ENCODE measurements at regions of chr10 and their contacts with region 1.

Region 1: DNA sequence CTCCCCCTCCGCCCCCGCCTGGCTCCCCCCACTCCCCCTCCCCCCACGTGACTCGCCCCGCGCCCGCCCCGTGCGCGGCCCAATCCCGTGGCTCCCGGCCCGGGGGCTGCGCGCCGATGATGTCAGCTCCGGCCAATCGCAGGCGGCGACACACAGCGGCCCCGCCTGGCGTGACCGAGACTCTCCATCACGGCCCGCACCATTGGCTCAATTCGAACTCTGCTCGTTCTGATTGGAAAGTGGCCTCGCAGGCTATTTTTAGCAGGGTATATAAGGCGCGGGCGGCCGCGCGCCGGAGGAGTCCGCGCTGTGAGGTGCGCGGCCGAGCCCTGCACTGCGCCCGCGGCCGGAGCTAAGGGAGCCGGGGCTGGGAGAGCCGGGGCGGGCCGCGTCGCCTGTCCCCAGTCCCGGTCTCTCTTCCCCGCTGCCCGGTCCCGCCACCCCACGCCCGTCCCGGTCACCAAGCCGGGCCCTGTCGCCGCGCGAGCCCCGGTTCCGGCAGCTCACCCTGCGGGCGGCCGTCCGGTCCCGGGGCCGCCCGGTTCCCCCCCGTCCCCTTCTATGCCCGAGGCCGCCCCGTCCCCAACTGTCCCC is 345 bp upstream of the KLF6 start:
- DNase-seq: peak; percentile 97
- H3K4me3 ChIP-seq: peak overlapping the region; percentile 98
- H3K27ac ChIP-seq: peak overlapping the region; percentile 100
- H3K4me1 ChIP-seq: peaks cover 2% of the 10 kb centered on the region; the same call in 1 of the 2 replicates
- H3K27me3 ChIP-seq: no peaks in the 10 kb centered on the region

Region 2: DNA sequence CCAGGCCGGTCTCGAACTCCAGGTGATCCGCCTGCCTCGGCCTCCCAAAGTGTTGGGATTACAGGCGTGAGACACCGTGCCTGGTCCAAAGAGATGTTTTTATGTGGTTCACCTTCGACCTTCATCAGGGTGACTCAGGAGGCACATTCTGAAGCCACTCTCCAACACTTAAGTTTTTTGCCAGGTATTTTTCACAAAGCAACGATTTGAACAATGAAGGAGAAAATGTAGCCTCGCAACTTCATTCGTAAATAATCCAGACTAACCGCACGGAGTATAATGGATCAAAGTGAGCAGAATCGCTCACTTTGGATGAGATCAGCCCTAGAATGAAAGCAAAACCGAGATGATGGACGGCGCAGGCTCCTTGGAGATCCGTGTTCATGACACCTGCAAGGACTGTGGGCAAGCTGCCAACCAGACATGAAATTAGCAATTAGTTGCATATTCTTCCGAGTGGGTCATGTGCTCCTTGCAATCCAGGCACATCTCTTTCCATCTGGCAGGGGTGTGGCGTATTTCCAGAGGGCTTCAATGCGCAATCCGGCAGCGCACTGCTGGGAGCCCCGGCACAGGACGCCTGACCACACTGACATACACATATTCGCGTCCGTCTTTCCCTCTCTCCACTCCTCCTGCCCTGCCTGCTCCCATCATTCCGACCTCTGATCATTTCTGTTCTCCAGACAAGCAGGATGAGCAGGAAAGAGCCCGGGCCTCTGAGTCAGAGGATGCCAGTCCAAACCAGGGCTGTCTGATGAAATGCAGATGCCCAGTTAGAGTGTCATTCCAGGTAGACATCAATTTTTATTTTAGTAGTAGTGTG is 148.8 kb before region 1 on chr10:
- in situ Hi-C with region 1: no loop called
- DNase-seq: peak; percentile 51
- H3K4me3 ChIP-seq: peak overlapping the region; percentile 33
- H3K27ac ChIP-seq: no peak overlapping the region
- H3K4me1 ChIP-seq: no peaks in the 10 kb centered on the region
- H3K27me3 ChIP-seq: no peaks in the 10 kb centered on the region

Region 3: GRCh38 chr10:3676564-3676963 is 108.8 kb before region 1 on chr10:
- in situ Hi-C with region 1: no loop called
- DNase-seq: no peak
- H3K4me3 ChIP-seq: no peak overlapping the region
- H3K27ac ChIP-seq: no peak overlapping the region
- H3K4me1 ChIP-seq: no peaks in the 10 kb centered on the region
- H3K27me3 ChIP-seq: no peaks in the 10 kb centered on the region

Region 4: GRCh38 chr10:3887885-3888476 is 102.6 kb after region 1 on chr10:
- in situ Hi-C with region 1: no loop called
- DNase-seq: peak; percentile 97
- H3K4me3 ChIP-seq: peak overlapping the region; percentile 58
- H3K27ac ChIP-seq: peak overlapping the region; percentile 99
- H3K4me1 ChIP-seq: peaks cover 57% of the 10 kb centered on the region
- H3K27me3 ChIP-seq: no peaks in the 10 kb centered on the region

Region 5: GRCh38 chr10:4241724-4242345 is 456.5 kb after region 1 on chr10:
- in situ Hi-C with region 1: loop called (anchors 10 kb)
- DNase-seq: peak; percentile 96
- H3K4me3 ChIP-seq: peak overlapping the region; percentile 74
- H3K27ac ChIP-seq: peak overlapping the region; percentile 99
- H3K4me1 ChIP-seq: peaks cover 68% of the 10 kb centered on the region
- H3K27me3 ChIP-seq: no peaks in the 10 kb centered on the region

Region 6: DNA sequence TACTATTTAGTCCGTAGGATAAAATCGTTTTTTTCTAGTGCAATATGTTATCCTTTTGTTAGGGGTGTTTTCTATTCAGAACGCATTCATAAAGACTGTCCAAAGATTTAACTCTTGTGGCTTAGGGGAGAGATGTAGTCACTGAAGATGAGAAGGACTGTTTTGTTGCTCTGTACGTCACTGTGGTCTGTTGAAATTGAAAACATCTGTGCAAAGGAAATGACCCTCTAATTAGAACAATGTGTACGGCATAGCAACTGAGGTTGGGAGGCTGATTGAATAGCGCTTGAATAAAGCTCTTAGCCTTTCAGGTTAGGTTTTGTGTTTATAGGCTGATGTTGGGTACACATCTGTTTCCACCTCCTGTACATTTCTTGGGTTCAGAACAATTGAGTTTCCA is 587.2 kb after region 1 on chr10:
- in situ Hi-C with region 1: no loop called
- DNase-seq: peak; percentile 95
- H3K4me3 ChIP-seq: peak overlapping the region; percentile 44
- H3K27ac ChIP-seq: peak overlapping the region; percentile 79
- H3K4me1 ChIP-seq: peaks cover 22% of the 10 kb centered on the region
- H3K27me3 ChIP-seq: no peaks in the 10 kb centered on the region

Measured in GM23248 (cell line).